Activated CD4-positive, alpha-beta T cell treated with anti-CD3 and anti-CD28 coated beads, Interleukin-2, amount 10 ng/mL, durations not matched to agents 24 days and 14 days (primary cell): ENCODE measurements at regions of chr20 and their contacts with region 1.

Region 1: GRCh38 chr20:3820048-3820900 is at the start of gene AP5S1:
- DNase-seq: peak; percentile 98
- H3K4me3 Mint-ChIP-seq: peak within 1 kb of the TSS; percentile 94
- H3K27ac Mint-ChIP-seq: peak within 1 kb of the TSS; percentile 94
- H3K4me1 Mint-ChIP-seq: peaks cover 33% of the 10 kb centered on the region
- H3K27me3 Mint-ChIP-seq: no peaks in the 10 kb centered on the region
- total RNA-seq, gene AP5S1: 13.0 and 13.5 TPM in 2 replicates

Region 2: DNA sequence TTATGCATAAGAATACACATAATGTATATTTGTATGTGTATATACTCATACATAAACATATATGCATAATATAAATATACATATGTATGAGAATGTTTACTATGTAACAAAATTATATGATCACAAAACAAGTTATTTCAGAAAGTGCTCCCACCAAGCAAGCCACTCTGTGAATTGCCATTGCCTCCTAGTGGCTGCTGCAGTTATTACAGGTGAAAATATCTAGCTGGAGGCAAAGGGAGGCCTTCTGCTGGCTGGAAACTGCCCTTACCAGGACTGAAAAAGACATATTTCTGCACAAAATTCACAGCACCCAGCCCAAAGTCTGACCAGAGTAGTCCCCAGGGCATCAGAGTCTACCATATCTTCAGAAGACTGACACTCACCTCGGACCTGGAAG is 124.1 kb before region 1 on chr20:
- intact Hi-C with region 1: no loop called
- DNase-seq: no peak
- H3K4me3 Mint-ChIP-seq: no peak overlapping the region
- H3K27ac Mint-ChIP-seq: no peak overlapping the region
- H3K4me1 Mint-ChIP-seq: no peaks in the 10 kb centered on the region
- H3K27me3 Mint-ChIP-seq: no peaks in the 10 kb centered on the region

Region 3: GRCh38 chr20:3753098-3753980 is 66.9 kb before region 1 on chr20:
- intact Hi-C with region 1: loop called (anchors 5 kb)
- DNase-seq: peak; percentile 88
- H3K4me3 Mint-ChIP-seq: no peak overlapping the region
- H3K27ac Mint-ChIP-seq: no peak overlapping the region
- H3K4me1 Mint-ChIP-seq: peaks cover 8% of the 10 kb centered on the region
- H3K27me3 Mint-ChIP-seq: peaks cover 1% of the 10 kb centered on the region

Region 4: GRCh38 chr20:3767427-3768341 is 52.6 kb before region 1 on chr20 and contains the start of gene ADISSP:
- intact Hi-C with region 1: loop called (anchors 1 kb)
- DNase-seq: peak; percentile 99
- H3K4me3 Mint-ChIP-seq: peak within 1 kb of the TSS; percentile 81
- H3K27ac Mint-ChIP-seq: peak within 1 kb of the TSS; percentile 97
- H3K4me1 Mint-ChIP-seq: peaks cover 22% of the 10 kb centered on the region
- H3K27me3 Mint-ChIP-seq: peaks cover 9% of the 10 kb centered on the region
- total RNA-seq, gene ADISSP: 62.9 and 68.8 TPM in 2 replicates

Region 5: GRCh38 chr20:3786665-3787323 is 33.5 kb before region 1 on chr20 and contains the start of gene CENPB:
- intact Hi-C with region 1: loop called (anchors 1 kb)
- DNase-seq: peak; percentile 98
- H3K4me3 Mint-ChIP-seq: peak within 1 kb of the TSS; percentile 87
- H3K27ac Mint-ChIP-seq: peak within 1 kb of the TSS; percentile 79
- H3K4me1 Mint-ChIP-seq: peaks cover 32% of the 10 kb centered on the region
- H3K27me3 Mint-ChIP-seq: no peaks in the 10 kb centered on the region
- total RNA-seq, gene CENPB: 72.8 and 74.4 TPM in 2 replicates

Region 6: GRCh38 chr20:3795511-3796468 is 24.5 kb before region 1 on chr20 and contains the start of gene CDC25B:
- intact Hi-C with region 1: loop called (anchors 1 kb)
- DNase-seq: peak; percentile 96
- H3K4me3 Mint-ChIP-seq: peak within 1 kb of the TSS; percentile 97
- H3K27ac Mint-ChIP-seq: peak within 1 kb of the TSS; percentile 96
- H3K4me1 Mint-ChIP-seq: peaks cover 44% of the 10 kb centered on the region
- H3K27me3 Mint-ChIP-seq: no peaks in the 10 kb centered on the region
- total RNA-seq, gene CDC25B: 70.7 and 75.5 TPM in 2 replicates

Region 7: GRCh38 chr20:3846740-3847428 is 26.6 kb after region 1 on chr20 and contains the start of gene MAVS:
- intact Hi-C with region 1: loop called (anchors 1 kb)
- DNase-seq: peak; percentile 97
- H3K4me3 Mint-ChIP-seq: peak within 1 kb of the TSS; percentile 92
- H3K27ac Mint-ChIP-seq: peak within 1 kb of the TSS; percentile 90
- H3K4me1 Mint-ChIP-seq: peaks cover 21% of the 10 kb centered on the region
- H3K27me3 Mint-ChIP-seq: no peaks in the 10 kb centered on the region
- total RNA-seq, gene MAVS: 39.3 and 40.2 TPM in 2 replicates

Region 8: GRCh38 chr20:3857405-3857804 is 37.1 kb after region 1 on chr20:
- intact Hi-C with region 1: no loop called
- DNase-seq: no peak
- H3K4me3 Mint-ChIP-seq: no peak overlapping the region
- H3K27ac Mint-ChIP-seq: no peak overlapping the region
- H3K4me1 Mint-ChIP-seq: peaks cover 7% of the 10 kb centered on the region
- H3K27me3 Mint-ChIP-seq: no peaks in the 10 kb centered on the region

Region 9: DNA sequence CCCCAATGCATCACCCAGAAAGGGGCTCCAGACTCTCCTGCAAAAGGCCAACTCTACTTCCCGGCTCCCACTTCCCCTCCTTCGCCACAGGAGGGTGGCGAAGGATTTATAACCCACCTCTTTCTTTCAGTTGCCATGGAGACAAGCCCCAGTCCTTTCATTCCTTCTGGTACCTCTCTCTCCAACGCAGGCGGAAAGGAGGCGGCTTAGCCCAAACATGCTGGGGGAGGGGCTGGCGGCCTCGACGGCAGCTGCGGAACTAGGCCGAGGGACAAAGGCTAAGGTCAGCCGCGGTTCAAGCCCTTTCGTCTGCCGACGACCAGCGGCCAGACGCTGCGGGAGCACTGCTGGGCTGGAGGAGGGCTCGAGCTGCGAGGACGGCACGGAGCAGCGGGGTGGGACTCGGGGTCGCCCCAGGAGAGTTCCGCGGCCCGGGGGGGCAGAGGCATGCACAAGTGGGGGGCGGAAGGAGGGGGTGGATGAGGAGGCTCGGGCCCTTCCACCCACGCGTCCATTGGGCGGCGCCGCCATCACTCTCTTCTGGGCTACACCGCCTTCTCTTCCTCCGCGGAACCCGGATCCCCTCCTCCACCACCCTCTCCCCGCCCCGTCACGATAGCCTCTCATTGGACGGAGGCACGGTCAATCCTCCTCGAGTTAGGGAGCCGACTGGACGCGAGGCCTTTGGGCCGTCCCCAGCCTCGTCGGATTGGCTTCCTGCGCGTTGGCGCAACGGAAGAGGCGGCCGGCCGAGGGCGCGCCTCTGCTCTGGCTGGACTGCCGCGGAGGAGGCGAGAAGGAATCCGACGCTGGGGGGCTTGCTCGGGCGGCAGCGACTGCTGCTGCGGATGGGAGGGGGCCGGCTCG is 68.6 kb after region 1 on chr20 and contains the start of gene PANK2:
- intact Hi-C with region 1: loop called (anchors 1 kb)
- DNase-seq: peak; percentile 100
- H3K4me3 Mint-ChIP-seq: peak within 1 kb of the TSS; percentile 100
- H3K27ac Mint-ChIP-seq: peak within 1 kb of the TSS; percentile 99
- H3K4me1 Mint-ChIP-seq: peaks cover 45% of the 10 kb centered on the region
- H3K27me3 Mint-ChIP-seq: no peaks in the 10 kb centered on the region
- total RNA-seq, gene PANK2: 45.4 and 52.2 TPM in 2 replicates

Region 10: GRCh38 chr20:3924304-3925112 is 104.2 kb after region 1 on chr20:
- intact Hi-C with region 1: no loop called
- DNase-seq: peak; percentile 55
- H3K4me3 Mint-ChIP-seq: no peak overlapping the region
- H3K27ac Mint-ChIP-seq: peak overlapping the region; percentile 49
- H3K4me1 Mint-ChIP-seq: peaks cover 29% of the 10 kb centered on the region
- H3K27me3 Mint-ChIP-seq: no peaks in the 10 kb centered on the region